Activated B cell treated with CpG ODN at 0.5 μM for 24 hours (primary cell): ENCODE measurements at regions of chr1 and their contacts with region 1.

Region 1: DNA sequence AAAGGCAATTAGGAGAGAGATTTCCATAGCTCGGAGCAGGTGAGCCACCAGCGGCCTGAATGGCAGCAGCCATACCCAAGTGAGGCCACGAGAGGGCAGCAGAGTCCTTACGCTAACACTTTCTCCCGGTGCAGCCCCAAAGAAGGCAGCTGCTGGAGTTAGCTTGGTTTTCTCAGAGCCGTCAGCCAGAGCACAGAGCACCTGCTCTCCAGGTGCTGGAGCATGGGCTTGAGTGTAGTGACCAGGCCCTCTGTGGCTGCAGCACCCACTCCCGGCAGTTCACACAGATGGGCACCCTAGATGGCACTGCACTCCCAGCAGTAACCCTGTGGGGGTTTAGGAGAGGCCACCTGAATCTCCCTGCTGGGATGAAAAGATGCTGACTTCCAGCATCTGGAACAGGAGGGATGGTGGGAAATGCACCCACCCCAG is 45.8 kb downstream of the TMCC2 start:
- DNase-seq: peak; percentile 77
- ATAC-seq: peak; percentile 89
- H3K4me3 Mint-ChIP-seq: peak overlapping the region; percentile 35
- H3K27ac Mint-ChIP-seq: peak overlapping the region; percentile 76
- H3K4me1 Mint-ChIP-seq: peaks cover 54% of the 10 kb centered on the region
- H3K27me3 Mint-ChIP-seq: no peaks in the 10 kb centered on the region
- CTCF ChIP-seq: peak; percentile 56

Region 2: DNA sequence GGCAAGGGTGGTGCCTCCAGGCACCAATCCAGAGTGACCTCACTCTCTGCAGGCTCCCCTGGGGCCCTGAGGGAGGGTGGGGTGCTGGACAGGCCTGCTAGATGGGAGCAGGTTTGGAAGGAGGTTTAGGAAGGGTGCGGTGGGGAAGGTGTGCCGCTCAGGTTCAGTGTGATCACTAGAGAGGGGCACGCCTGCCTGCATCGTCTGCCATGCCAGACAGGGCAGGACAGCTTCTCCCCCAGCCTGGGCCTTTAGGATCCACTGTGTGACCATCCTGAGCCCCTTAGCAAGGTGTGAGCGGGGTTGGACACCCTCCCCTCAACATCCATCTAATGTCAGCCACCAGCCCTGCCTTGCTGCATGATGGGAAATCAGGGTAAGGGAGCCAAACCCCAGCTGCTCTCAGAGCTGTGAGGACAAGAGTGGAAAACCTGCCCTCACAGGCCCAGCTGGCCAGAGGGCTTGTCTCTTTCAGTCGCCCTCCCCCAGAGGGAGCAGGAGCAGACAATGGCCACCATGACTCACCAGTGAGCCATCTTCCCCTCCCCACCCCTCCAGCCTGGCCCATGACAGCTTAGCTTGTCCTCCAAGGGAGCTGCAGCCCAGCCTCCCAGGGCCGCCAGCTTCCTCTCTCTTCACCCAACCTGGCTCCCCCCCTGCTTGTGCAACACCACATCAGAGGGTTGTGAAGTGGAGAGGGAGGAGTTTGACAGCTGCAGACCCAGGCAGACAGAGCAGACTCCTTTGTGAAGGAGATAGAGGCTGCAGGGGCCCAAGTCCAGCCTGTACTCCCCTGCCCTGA is 11.0 kb after region 1 on chr1:
- CTCF ChIA-PET with region 1: interaction called, 139 read pairs
- POLR2A ChIA-PET with region 1: interaction called, 196 read pairs
- intact Hi-C with region 1: loop called (anchors 1 kb)
- DNase-seq: peak; percentile 63
- ATAC-seq: peak; percentile 42
- H3K4me3 Mint-ChIP-seq: peak overlapping the region; percentile 67
- H3K27ac Mint-ChIP-seq: peak overlapping the region; percentile 98
- H3K4me1 Mint-ChIP-seq: peaks cover 90% of the 10 kb centered on the region
- H3K27me3 Mint-ChIP-seq: no peaks in the 10 kb centered on the region
- CTCF ChIP-seq: no peak

Region 3: GRCh38 chr1:205300886-205301821 is 27.6 kb after region 1 on chr1:
- CTCF ChIA-PET with region 1: interaction called, 21 read pairs
- POLR2A ChIA-PET with region 1: interaction called, 1,622 read pairs
- intact Hi-C with region 1: no loop called
- DNase-seq: no peak
- ATAC-seq: peak; percentile 59
- H3K4me3 Mint-ChIP-seq: peak overlapping the region; percentile 46
- H3K27ac Mint-ChIP-seq: peak overlapping the region; percentile 78
- H3K4me1 Mint-ChIP-seq: peaks cover 69% of the 10 kb centered on the region
- H3K27me3 Mint-ChIP-seq: no peaks in the 10 kb centered on the region
- CTCF ChIP-seq: no peak

Region 4: GRCh38 chr1:205321164-205321958 is 47.8 kb after region 1 on chr1 and contains the start of gene NUAK2:
- CTCF ChIA-PET with region 1: interaction called, 585 read pairs
- POLR2A ChIA-PET with region 1: interaction called, 1,622 read pairs
- intact Hi-C with region 1: loop called (anchors 1 kb)
- DNase-seq: peak; percentile 83
- ATAC-seq: peak; percentile 86
- H3K4me3 Mint-ChIP-seq: peak within 1 kb of the TSS; percentile 97
- H3K27ac Mint-ChIP-seq: peak within 1 kb of the TSS; percentile 98
- H3K4me1 Mint-ChIP-seq: peaks cover 78% of the 10 kb centered on the region
- H3K27me3 Mint-ChIP-seq: peaks cover 2% of the 10 kb centered on the region
- CTCF ChIP-seq: no peak
- total RNA-seq, gene NUAK2: 26.1 and 26.2 TPM in 2 replicates

Region 5: DNA sequence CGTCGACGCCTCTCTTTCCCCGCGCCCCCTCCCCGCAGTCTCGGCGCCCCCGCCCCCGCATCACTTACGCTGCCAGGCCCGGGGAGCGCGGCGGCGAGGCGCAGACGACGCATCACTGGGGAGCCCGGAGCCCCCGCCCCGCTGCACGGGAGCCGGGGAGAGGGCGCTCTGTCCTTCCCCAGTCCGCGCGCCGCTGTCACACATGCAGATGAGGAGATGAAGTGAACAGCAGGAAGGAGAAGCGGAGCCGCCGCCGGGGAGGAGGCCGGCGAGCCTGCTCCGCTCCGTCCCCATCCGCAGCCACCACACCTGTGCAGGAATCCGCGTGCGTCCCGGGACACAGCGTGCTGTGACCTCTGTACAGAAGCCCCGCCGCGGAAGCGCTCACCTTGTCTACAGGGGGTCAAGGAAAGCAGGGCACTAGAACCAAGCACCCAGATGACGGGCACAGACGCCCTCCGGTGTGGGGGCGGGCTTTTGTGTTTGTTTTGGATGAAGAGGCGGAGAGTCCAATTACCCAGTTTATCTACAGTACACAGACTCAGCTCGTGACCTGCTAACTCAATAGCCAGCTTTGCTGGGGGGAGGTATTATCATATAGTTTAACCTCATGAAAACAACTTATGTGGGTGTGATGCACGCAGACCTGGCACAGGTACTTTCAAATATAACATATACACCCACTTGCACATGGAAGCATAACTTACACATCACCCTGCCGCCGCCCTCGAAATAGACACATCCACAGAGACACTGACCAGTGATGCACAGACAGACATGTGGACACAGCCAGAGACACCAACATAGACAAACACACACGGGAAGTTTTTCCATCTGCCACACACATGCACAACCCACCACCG is 70.7 kb after region 1 on chr1:
- CTCF ChIA-PET with region 1: interaction called, 27 read pairs
- POLR2A ChIA-PET with region 1: interaction called, 3 read pairs
- intact Hi-C with region 1: no loop called
- DNase-seq: peak; percentile 49
- ATAC-seq: peak; percentile 59
- H3K4me3 Mint-ChIP-seq: peak overlapping the region; percentile 74
- H3K27ac Mint-ChIP-seq: no peak overlapping the region
- H3K4me1 Mint-ChIP-seq: peaks cover 40% of the 10 kb centered on the region
- H3K27me3 Mint-ChIP-seq: peaks cover 11% of the 10 kb centered on the region
- CTCF ChIP-seq: no peak

Region 6: DNA sequence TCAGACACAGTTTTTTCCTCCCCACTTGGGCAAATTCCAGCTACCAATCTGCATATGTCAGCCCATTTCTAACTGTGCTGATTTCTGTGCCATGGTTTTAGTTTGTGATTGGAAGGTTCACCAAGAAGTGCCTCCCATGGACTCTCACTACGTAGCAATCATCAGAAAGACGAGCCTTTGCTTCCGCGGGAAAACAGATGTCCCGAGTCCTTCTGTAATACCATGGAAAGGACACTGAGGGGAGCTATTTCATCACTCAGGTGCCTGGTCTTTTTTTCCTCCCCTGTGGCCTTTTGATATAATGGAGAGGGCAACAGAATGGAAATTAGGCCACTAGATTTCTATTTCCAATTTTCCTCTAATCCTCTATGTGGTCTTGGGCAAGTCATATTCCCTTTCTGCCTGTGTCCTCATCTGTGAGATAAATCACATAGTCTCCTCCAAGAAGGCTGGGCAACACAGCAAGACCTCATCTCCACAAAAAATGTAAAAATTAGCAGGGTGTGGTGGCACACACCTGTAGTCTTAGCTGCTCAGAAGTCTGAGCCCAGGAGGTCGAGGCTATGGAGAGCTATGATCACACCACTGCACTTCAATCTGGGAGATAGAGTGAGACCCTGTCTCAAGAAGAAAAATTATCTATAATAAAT is 123.5 kb after region 1 on chr1:
- CTCF ChIA-PET with region 1: interaction called, 12 read pairs
- POLR2A ChIA-PET with region 1: no interaction called
- intact Hi-C with region 1: no loop called
- DNase-seq: no peak
- ATAC-seq: peak; percentile 52
- H3K4me3 Mint-ChIP-seq: no peak overlapping the region
- H3K27ac Mint-ChIP-seq: no peak overlapping the region
- H3K4me1 Mint-ChIP-seq: no peaks in the 10 kb centered on the region
- H3K27me3 Mint-ChIP-seq: peaks cover 12% of the 10 kb centered on the region
- CTCF ChIP-seq: no peak

Region 7: DNA sequence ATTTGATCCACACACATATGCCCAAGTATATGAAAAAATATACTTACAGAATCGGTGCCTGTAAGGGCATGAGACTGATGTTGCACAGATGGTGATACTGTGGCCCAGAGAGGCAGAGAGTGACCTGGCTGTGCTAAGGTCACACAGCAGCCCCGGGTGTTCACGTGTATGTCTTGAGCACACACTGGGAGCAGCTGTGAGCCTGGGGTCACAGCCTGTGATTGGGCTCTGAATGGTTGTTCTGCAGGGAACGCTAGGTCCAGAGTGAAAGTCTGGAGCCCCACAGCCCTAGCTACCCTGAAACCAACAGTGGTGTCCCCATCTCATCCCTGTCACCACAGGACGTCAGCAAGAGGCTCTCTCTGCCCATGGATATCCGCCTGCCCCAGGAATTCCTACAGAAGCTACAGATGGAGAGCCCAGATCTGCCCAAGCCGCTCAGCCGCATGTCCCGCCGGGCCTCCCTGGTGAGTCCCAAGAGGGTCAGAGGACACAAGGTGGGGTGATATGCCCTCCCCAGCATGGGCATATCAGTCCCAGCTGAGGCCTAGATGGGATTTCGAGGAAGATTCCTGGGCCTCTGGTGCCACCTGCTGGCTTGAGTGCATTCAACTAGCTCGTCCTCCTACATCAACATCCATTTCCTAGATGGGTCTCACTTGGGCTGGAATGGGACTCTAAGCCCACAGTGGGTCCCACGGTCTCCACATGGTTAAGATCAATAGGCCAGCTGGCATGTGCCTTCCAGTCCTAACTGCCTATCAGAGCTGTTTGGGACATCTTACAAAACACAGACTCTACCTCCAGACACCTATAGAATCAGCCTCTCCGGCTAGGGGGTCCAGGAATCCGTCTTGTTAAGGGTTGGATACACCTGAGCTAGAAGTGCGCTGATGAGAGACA is 250.6 kb after region 1 on chr1:
- CTCF ChIA-PET with region 1: interaction called, 41 read pairs
- POLR2A ChIA-PET with region 1: no interaction called
- intact Hi-C with region 1: loop called (anchors 1 kb)
- DNase-seq: peak; percentile 67
- ATAC-seq: peak; percentile 69
- H3K4me3 Mint-ChIP-seq: no peak overlapping the region
- H3K27ac Mint-ChIP-seq: no peak overlapping the region
- H3K4me1 Mint-ChIP-seq: no peaks in the 10 kb centered on the region
- H3K27me3 Mint-ChIP-seq: peaks cover 6% of the 10 kb centered on the region
- CTCF ChIP-seq: no peak